Posterior cingulate gyrus (tissue), 11 donors: ENCODE measurements at regions of chr15 and their contacts with region 1.

Region 1: DNA sequence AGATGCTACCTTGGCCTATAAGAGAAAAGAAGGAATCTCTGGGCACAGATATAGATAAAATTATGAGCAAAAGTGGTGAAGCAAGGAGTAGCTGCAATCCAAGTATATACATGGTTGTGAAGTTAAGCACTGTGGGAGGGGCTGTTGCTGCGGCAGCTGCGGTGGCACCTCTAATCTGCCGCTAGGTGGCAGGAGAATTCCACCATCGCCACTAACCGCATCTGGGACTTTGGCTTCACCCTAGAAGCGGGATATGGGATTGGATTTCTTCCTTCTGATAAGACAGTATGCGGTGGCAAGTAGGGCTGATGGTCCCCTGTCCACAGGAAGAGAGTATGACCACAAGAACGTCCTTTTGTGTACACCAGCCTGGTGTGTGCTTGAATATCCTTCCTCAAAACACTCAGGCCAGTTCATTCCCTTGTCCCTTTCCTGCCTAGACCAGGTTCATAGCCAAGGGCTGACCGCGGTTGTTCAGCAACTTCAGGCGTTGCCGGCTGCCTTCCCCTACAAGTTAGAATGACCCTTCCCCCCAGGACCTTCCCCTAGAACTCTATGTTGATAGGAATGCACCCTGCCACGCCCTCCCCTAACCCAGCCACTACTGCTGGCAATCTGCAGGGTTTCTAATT is 5.1 kb downstream of the MAGEL2 start:
- DNase-seq: peak; percentile 44 to 95 (median 73)

Region 2: DNA sequence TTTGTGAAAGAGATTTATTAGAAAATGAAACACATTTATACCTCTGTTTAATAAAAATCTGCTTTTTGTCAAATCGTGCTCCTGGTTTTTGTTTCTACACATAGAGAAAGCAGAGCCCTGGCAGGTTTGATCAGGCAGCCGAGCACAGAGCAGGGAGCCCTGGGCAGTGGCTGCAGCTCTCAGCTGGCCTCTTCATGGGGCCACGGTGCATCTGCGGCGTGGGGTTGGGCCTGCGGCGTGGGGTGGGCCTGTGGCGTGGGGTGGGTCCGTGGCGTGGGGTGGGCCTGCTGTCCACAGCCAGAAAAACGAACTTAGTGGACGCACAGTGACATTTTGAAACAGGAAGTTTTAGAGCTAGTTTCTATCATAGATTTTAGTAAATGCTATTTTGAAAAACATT is 206.1 kb before region 1 on chr15:
- intact Hi-C with region 1: no loop called
- DNase-seq: no peak

Region 3: GRCh38 chr15:23857028-23857641 is 214.6 kb after region 1 on chr15:
- intact Hi-C with region 1: loop called (anchors 2 kb)
- DNase-seq: peak in 7 of 10 donors; percentile 33 to 86 (median 59)

Region 4: GRCh38 chr15:23866832-23867231 is 224.3 kb after region 1 on chr15:
- intact Hi-C with region 1: loop called (anchors 2 kb)
- DNase-seq: no peak

Region 5: GRCh38 chr15:23983500-23984259 is 341.2 kb after region 1 on chr15:
- intact Hi-C with region 1: no loop called
- DNase-seq: no peak